Aorta (tissue), 5 donors: ENCODE measurements at regions of chr1 and their contacts with region 1.

Region 1: GRCh38 chr1:25796811-25797458 is 3.1 kb upstream of the SELENON start:
- DNase-seq: peak; percentile 91 to 95
- ATAC-seq: peak; percentile 70
- H3K4me3 ChIP-seq: no peak overlapping the region
- H3K27ac ChIP-seq: no peak overlapping the region
- H3K4me1 ChIP-seq: no peaks in the 10 kb centered on the region
- H3K27me3 ChIP-seq: no peaks in the 10 kb centered on the region

Region 2: GRCh38 chr1:25430666-25431505 is 366.0 kb before region 1 on chr1 and contains the start of gene MACO1:
- intact Hi-C with region 1: loop called in 1 of 2 experiments (anchors 10 kb)
- DNase-seq: peak; percentile 97
- ATAC-seq: peak; percentile 98
- H3K4me3 ChIP-seq: peak within 1 kb of the TSS; percentile 60 to 95
- H3K27ac ChIP-seq: peak within 1 kb of the TSS; percentile 19 to 87
- H3K4me1 ChIP-seq: peaks cover 3 to 5% of the 10 kb centered on the region in 2 donors
- H3K27me3 ChIP-seq: no peaks in the 10 kb centered on the region
- total RNA-seq, gene MACO1: 14.8 to 19.7 TPM

Region 3: GRCh38 chr1:25608488-25609178 is 188.3 kb before region 1 on chr1:
- intact Hi-C with region 1: loop called in 1 of 2 experiments (anchors 2 kb)
- DNase-seq: peak; percentile 92 to 94
- ATAC-seq: peak; percentile 84
- H3K4me3 ChIP-seq: no peak overlapping the region
- H3K27ac ChIP-seq: no peak overlapping the region
- H3K4me1 ChIP-seq: no peaks in the 10 kb centered on the region
- H3K27me3 ChIP-seq: no peaks in the 10 kb centered on the region

Region 4: GRCh38 chr1:25628741-25629421 is 168.1 kb before region 1 on chr1:
- intact Hi-C with region 1: no loop called
- DNase-seq: no peak
- ATAC-seq: no peak
- H3K4me3 ChIP-seq: no peak overlapping the region
- H3K27ac ChIP-seq: no peak overlapping the region
- H3K4me1 ChIP-seq: no peaks in the 10 kb centered on the region
- H3K27me3 ChIP-seq: no peaks in the 10 kb centered on the region

Region 5: DNA sequence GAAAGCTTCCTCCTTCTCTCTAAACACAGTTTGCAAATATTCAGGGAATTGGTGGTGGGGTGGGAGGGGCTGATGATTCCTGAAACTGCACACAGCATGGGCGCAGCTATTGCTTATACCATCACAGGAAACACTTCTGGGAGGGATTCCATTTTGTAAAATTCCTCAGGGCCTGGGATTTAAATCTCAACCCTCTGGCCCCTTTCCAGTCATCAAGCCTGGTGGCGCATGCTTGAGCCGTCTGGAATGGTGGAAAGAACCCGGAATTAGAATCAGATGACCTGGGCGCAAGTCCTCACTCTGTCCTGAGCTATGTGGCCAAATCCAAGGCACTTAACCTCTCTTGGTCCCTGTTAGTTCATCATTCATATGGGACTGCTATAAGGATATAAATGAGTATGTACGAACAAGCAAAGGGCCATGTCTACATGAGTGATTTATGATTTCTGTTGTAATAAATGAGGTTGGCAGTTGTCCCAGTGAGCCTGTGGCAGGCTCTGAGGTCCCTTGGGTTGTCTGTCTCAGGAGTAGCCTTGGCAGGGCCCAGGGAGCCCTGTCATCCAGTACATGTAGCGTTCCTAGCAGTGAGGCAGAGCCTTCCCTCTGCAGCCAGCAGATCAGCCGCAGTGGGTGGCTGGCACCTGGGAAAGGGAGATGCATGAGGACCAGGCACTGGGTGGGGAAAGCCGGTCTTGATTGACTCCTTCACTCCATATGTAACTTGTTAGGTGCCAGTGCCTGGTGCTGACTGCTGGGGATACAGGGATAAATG is 108.4 kb before region 1 on chr1:
- intact Hi-C with region 1: loop called in 1 of 2 experiments (anchors 5 kb)
- DNase-seq: peak; percentile 76 to 84
- ATAC-seq: peak; percentile 64
- H3K4me3 ChIP-seq: no peak overlapping the region
- H3K27ac ChIP-seq: peak overlapping the region in 1 of 2 donors; percentile 85
- H3K4me1 ChIP-seq: no peaks in the 10 kb centered on the region
- H3K27me3 ChIP-seq: no peaks in the 10 kb centered on the region